Vagina (tissue), 2 donors: ENCODE measurements at regions of chr10 and their contacts with region 1.

Region 1: DNA sequence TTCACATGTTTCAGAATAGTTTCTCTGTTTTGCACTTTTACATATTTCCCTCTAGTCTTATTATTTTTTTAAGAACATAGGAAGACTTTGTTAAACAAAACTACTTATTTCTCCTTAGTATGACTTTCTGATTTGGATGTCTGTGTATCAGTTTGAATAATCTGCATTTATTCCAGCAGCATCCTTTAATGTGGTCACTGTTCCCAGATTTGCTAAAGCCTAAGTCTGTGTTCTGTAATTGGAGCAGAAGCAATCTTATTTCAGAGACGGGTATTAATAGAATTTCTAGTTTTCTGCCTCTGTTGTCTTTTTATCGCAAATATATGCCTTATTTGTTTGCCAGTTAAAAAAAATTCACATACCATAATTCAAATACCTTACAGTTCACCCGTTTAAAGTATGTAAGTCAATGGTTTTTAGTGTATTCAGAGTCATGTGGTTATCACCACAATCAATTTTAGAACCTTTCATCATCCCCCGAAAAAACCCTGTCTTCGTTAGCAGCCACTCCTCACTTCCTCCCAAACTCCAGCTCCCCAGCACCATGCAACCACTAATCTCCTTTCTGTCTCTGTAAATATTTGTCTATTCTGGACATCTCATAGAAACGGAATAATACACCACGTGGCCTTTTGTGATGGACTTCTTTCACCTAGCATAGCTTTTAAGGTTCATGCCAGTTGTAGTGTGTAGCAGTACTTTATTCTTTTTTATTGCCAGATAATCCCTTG is 58.7 kb downstream of the INPP5F start:
- DNase-seq: no peak
- H3K4me3 ChIP-seq: no peak overlapping the region
- H3K27ac ChIP-seq: no peak overlapping the region
- H3K4me1 ChIP-seq: no peaks in the 10 kb centered on the region
- H3K27me3 ChIP-seq: no peaks in the 10 kb centered on the region
- CTCF ChIP-seq: no peak
- POLR2A ChIP-seq: no peak

Region 2: GRCh38 chr10:118183180-118183579 is 1601.3 kb before region 1 on chr10:
- intact Hi-C with region 1: no loop called
- DNase-seq: no peak
- H3K4me3 ChIP-seq: no peak overlapping the region
- H3K27ac ChIP-seq: no peak overlapping the region
- H3K4me1 ChIP-seq: no peaks in the 10 kb centered on the region
- H3K27me3 ChIP-seq: no peaks in the 10 kb centered on the region
- CTCF ChIP-seq: no peak
- POLR2A ChIP-seq: no peak

Region 3: DNA sequence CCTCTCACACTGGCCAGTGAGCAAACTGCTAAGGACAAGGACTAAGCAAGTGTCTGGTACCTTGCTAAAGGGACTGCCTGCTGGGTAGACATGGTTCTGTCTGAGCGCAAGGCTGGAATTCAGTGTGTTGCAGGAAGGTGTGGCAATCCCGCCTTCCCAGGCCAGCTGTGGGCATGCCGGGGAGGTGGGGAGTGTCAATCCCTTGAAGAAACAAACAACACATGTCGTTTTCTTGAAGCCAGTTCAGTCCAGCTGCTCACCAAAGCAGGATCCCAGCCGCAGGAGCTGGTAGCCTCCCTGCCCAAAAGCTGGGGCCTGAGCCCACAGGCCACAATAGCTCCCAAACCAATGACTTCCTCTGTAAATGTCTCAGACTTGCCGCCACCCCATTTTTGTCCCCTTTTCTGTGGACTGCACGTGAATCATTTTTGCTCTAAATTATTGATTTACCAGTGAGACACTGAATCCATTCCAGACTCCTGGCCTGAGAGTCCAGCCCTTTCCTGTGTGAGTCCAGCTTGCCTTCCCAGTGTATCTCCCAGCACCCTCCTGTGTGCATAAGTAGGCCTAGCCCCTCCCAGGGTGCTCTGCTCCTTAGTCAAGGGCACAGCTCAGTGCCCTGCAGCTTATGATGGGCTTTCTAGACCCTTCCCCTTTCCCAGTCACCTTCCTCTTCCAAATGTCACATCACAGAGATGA is 408.8 kb before region 1 on chr10:
- intact Hi-C with region 1: loop called (anchors 5 kb)
- DNase-seq: no peak
- H3K4me3 ChIP-seq: no peak overlapping the region
- H3K27ac ChIP-seq: peak overlapping the region; percentile 52
- H3K4me1 ChIP-seq: peaks cover 58% of the 10 kb centered on the region
- H3K27me3 ChIP-seq: no peaks in the 10 kb centered on the region
- CTCF ChIP-seq: no peak
- POLR2A ChIP-seq: no peak

Region 4: GRCh38 chr10:119596537-119597404 is 187.7 kb before region 1 on chr10 and contains the start of gene TIAL1:
- intact Hi-C with region 1: no loop called
- DNase-seq: peak in 1 of 2 donors; percentile 99
- H3K4me3 ChIP-seq: peak within 1 kb of the TSS; percentile 73 to 91
- H3K27ac ChIP-seq: peak within 1 kb of the TSS; percentile 98
- H3K4me1 ChIP-seq: peaks cover 46% of the 10 kb centered on the region
- H3K27me3 ChIP-seq: no peaks in the 10 kb centered on the region
- CTCF ChIP-seq: no peak
- POLR2A ChIP-seq: peak in 1 of 2 donors; percentile 27
- total RNA-seq, gene TIAL1: 71.2 TPM